ENCODE measurements at regions of chr11 and their contacts with region 1.

Region 1: GRCh38 chr11:76248210-76248609 is 41.9 kb upstream of the WNT11 start:
- DNase-seq: peak in 1 of 2 donors; percentile 5
- ATAC-seq: no peak
- H3K4me3 ChIP-seq: no peak overlapping the region
- H3K27ac ChIP-seq: no peak overlapping the region
- H3K4me1 ChIP-seq: peaks cover 4% of the 10 kb centered on the region
- H3K27me3 ChIP-seq: no peaks in the 10 kb centered on the region
- CTCF ChIP-seq: no peak

Region 2: DNA sequence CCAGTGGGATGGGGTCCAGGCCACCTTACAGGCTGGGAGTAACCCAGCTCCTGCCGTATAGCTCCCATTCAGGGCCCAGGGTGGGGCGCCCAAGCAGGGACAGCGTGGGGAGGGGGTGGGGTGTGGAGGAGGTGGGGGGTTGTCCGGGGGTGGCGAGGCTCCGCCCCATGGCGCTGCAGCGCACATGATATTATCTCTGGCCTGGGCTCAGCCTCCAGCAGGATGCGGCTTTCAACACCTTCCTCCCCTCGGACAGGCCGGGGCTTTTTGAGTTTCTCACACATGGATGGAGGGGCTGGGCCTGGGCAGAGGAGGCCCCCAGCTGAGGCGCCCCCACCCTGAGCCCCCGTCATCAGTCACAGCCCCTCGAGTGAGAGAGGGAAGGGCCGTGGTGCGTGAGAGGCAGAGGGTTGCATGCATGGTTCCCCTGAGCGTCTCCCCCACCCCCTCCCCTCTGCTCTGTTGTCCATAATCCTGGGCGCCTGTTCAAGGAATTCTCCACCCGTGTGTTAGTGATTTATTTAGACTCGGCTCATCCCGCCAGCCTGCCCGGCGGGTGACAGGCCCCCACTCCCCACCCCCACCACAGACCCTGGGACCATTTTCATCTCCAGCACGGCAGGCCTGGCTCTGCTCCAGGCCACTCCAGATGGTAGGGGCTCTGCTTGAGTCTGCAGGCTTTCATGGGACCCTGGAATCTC is 86.8 kb before region 1 on chr11:
- intact Hi-C with region 1: loop called in 1 of 2 experiments (anchors 10 kb)
- DNase-seq: no peak
- ATAC-seq: peak; percentile 50 to 77 (median 72)
- H3K4me3 ChIP-seq: peak overlapping the region; percentile 30
- H3K27ac ChIP-seq: no peak overlapping the region
- H3K4me1 ChIP-seq: peaks cover 8% of the 10 kb centered on the region
- H3K27me3 ChIP-seq: no peaks in the 10 kb centered on the region
- CTCF ChIP-seq: no peak

Region 3: DNA sequence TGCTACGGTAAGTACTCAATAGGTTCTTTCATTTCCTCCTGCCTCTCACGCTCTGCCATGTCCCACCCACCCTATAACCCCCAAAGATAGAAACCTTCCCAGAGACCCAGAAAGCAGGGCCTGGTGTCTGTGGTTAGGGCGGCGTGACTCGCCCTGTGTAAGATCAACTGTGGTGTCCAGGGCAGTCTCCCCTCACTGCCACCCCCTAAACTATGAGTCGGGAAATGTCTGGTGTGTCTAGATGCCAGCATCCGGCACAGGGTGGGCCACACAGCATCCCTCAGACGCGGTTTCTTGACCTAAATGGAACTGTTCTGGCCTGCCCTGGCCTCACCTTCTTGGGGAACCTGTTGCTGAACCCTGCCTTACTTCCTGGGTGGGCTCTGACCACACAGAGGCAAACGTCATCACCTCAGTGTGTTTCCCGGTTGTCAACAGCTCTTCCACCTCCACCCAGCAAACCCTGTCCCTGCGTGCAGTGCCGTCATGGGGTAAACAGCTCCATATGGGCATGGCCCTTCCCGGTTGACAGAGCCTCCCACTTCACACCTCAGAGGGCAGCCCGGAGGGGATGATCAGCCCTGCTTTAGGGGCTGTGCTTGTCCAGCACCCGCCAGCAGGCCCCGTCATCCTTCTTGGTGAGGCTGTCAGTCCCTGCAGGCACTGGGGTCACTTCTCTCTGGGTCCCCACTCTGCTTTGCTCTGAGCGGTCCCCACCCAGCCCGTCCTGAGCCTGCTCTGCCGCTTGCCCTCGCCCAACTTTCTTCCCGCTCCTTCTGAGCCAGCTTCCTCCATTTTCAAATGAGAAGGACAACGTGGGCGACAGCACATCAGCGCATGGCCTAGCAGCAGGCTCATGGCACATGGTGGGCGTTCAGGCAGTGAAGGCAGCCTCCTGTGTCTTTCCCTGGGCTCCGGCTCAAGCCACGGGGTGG is 47.9 kb before region 1 on chr11:
- intact Hi-C with region 1: no loop called
- DNase-seq: peak in 1 of 2 donors; percentile 7
- ATAC-seq: no peak
- H3K4me3 ChIP-seq: no peak overlapping the region
- H3K27ac ChIP-seq: no peak overlapping the region
- H3K4me1 ChIP-seq: no peaks in the 10 kb centered on the region
- H3K27me3 ChIP-seq: no peaks in the 10 kb centered on the region
- CTCF ChIP-seq: no peak

Measured in psoas muscle (tissue), 8 donors.